ENCODE measurements at regions of chr21 and their contacts with region 1.

Region 1: GRCh38 chr21:44709426-44710293 is 1.7 kb downstream of the TSPEAR start:
- DNase-seq: peak in 2 of 9 donors; percentile 13 to 32
- ATAC-seq: peak; percentile 58
- H3K4me3 ChIP-seq: peak overlapping the region; percentile 20
- H3K4me3 Mint-ChIP-seq: peak overlapping the region; percentile 39 to 82 (median 72)
- H3K27ac ChIP-seq: no peak overlapping the region
- H3K27ac Mint-ChIP-seq: peak overlapping the region in 2 of 9 donors; percentile 9 to 23
- H3K4me1 ChIP-seq: peaks cover 25 to 34% of the 10 kb centered on the region in 2 donors
- H3K4me1 Mint-ChIP-seq: peaks cover 9 to 46% (median 27%) of the 10 kb centered on the region in 7 donors
- H3K27me3 ChIP-seq: peaks cover 8 to 32% of the 10 kb centered on the region in 2 donors
- H3K27me3 Mint-ChIP-seq: peaks cover 70 to 93% (median 79%) of the 10 kb centered on the region in 5 donors

Region 2: DNA sequence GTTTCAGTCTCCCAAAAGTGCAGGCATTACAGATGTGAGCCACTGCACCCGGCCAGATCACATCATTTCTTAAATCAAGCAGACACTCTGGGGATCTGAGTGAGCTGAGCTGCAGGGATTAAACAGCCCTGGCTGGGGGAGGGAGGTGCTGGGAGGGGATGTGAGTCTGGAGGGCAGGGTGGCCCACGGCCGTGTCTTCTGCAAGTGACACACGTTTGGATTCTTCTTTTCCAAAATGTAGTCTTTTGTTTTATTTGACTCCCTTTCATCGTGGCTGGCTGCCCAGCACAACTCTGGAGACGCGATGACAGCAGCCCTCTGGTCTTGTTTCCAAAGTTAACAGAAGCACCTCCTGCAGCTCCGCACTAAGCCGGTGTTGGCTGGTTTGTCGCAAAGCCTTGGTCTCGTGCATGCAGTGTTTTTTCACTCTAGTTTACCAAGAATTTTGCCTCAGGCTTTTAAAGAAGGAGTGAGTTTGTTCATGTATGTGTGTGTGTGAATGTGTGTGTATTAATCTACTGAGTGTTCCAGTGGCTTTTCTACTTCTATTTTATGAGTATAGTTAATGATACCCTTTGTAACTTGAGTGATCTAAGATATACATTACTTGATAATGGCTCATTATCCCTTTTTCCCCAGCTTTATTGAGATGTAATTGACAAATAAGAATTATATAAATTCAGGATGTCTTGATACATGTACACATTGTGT is 126.4 kb before region 1 on chr21:
- CTCF ChIA-PET with region 1: no interaction called
- POLR2A ChIA-PET with region 1: no interaction called
- intact Hi-C with region 1: loop called in 1 of 2 experiments (anchors 5 kb)
- DNase-seq: no peak
- ATAC-seq: no peak
- H3K4me3 ChIP-seq: no peak overlapping the region
- H3K4me3 Mint-ChIP-seq: peak overlapping the region in 1 of 10 donors; percentile 13
- H3K27ac ChIP-seq: no peak overlapping the region
- H3K27ac Mint-ChIP-seq: peak overlapping the region in 3 of 9 donors; percentile 17 to 62 (median 22)
- H3K4me1 ChIP-seq: peaks cover 0 to 8% of the 10 kb centered on the region in 2 donors
- H3K4me1 Mint-ChIP-seq: peaks cover 14 to 43% (median 34%) of the 10 kb centered on the region in 7 donors
- H3K27me3 ChIP-seq: no peaks in the 10 kb centered on the region
- H3K27me3 Mint-ChIP-seq: peaks cover 0 to 39% (median 25%) of the 10 kb centered on the region in 5 donors

Region 3: DNA sequence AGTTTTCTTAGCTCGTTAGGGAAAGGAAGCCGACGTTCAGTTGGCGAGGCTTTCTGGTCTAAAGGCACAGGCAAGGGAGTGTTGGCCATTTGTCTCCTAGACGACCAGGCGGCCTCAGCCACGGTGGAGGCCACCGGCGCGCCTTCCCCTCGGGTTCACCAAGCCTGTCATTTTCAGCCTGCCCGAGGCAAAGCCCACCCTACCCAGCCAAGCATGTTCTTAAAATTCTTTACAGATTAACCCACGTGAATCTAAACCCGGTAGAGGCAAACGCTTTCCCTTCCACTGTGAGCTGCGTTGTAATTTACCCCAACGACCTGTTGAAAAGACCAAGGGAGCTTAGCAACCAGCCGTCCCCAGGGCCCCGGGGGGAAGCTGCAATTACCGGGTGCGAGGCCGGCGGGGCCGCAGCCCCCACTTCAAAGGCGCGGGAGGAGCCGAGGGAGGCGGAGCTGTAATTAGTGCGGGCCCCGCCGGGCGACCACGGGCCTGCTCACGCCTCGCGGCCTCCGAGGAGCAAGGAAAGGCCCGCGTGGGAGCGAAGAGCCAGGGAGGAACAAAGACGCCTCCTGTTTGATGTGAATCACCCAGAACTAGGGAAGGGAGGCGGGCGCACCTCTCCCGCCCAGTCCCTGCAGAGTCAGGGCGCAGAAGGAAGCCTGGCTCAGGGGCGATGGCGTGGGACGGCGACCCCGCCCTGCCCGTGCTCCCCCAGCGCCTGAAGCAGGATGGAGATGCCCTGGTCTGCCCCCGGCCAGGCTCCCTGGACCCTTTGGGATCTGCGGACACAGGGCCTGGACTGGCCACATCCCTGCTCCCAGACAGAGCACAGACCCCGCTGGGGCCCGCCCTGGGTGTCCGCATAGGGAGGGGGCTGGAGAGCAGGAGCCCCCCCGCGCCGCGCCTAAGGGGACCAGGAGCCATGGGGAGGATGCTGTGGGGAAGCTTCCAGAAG is 13.8 kb after region 1 on chr21:
- CTCF ChIA-PET with region 1: no interaction called
- POLR2A ChIA-PET with region 1: interaction called, 4 read pairs
- intact Hi-C with region 1: loop called in 1 of 2 experiments (anchors 2 kb)
- DNase-seq: peak in 5 of 9 donors; percentile 19 to 37 (median 33)
- ATAC-seq: peak; percentile 18
- H3K4me3 ChIP-seq: peak overlapping the region; percentile 55
- H3K4me3 Mint-ChIP-seq: peak overlapping the region in 9 of 10 donors; percentile 75 to 87 (median 83)
- H3K27ac ChIP-seq: no peak overlapping the region
- H3K27ac Mint-ChIP-seq: peak overlapping the region in 7 of 9 donors; percentile 36 to 81 (median 71)
- H3K4me1 ChIP-seq: peaks cover 10 to 16% of the 10 kb centered on the region in 2 donors
- H3K4me1 Mint-ChIP-seq: peaks cover 3 to 15% (median 13%) of the 10 kb centered on the region in 7 donors
- H3K27me3 ChIP-seq: peaks cover 0 to 5% of the 10 kb centered on the region in 2 donors
- H3K27me3 Mint-ChIP-seq: peaks cover 9 to 69% (median 35%) of the 10 kb centered on the region in 5 donors

Region 4: DNA sequence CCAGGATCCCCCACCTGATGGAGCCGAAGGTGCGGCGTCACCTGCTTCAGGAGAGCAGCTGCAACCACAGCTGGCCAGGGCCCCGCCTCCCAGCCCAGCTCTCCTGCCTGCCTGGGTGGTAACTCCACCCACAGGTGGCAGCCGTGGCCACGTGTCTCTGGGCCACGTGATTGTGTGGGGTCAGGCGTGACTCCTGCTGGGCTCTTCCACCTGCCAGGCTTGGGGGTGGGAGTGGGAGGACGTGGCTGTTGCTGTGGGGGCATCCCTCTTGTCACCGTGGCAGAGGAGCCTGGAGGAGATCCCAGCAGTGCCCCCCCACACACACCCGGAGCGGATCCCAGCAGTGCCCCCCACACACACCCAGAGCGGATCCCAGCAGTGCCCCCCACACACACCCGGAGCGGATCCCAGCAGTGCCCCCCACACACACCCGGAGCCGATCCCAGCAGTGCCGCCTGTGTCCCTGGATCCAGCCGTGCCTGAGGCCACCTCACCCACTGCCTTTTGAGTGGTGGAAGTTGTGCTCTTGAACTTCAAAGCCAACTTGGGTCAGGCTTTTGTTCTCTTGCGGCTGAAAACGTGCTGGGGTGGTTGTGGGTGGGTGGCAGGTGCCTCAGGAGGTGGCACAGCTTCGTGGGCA is 545.8 kb after region 1 on chr21:
- CTCF ChIA-PET with region 1: no interaction called
- POLR2A ChIA-PET with region 1: no interaction called
- intact Hi-C with region 1: no loop called
- DNase-seq: peak in 1 of 9 donors; percentile 31
- ATAC-seq: peak; percentile 67
- H3K4me3 ChIP-seq: no peak overlapping the region
- H3K4me3 Mint-ChIP-seq: peak overlapping the region in 5 of 10 donors; percentile 4 to 67 (median 33)
- H3K27ac ChIP-seq: no peak overlapping the region
- H3K27ac Mint-ChIP-seq: peak overlapping the region in 1 of 9 donors; percentile 43
- H3K4me1 ChIP-seq: peaks cover 0 to 5% of the 10 kb centered on the region in 2 donors
- H3K4me1 Mint-ChIP-seq: peaks cover 0 to 18% (median 9%) of the 10 kb centered on the region in 7 donors
- H3K27me3 ChIP-seq: peaks cover 0 to 5% of the 10 kb centered on the region in 2 donors
- H3K27me3 Mint-ChIP-seq: peaks cover 5 to 16% (median 13%) of the 10 kb centered on the region in 5 donors